Activated CD4-positive, alpha-beta T cell treated with anti-CD3 and anti-CD28 coated beads, Interleukin-2, amount 10 ng/mL, durations not matched to agents 24 days and 14 days (primary cell): ENCODE measurements at regions of chr22 and their contacts with region 1.

Region 1: GRCh38 chr22:25702040-25702439 is 39.9 kb upstream of the MYO18B start:
- DNase-seq: no peak
- H3K4me3 Mint-ChIP-seq: peak overlapping the region; percentile 69
- H3K27ac Mint-ChIP-seq: peak overlapping the region; percentile 61
- H3K4me1 Mint-ChIP-seq: peaks cover 47% of the 10 kb centered on the region
- H3K27me3 Mint-ChIP-seq: no peaks in the 10 kb centered on the region

Region 2: GRCh38 chr22:25447686-25448434 is 254.2 kb before region 1 on chr22:
- intact Hi-C with region 1: loop called (anchors 5 kb)
- DNase-seq: peak; percentile 97
- H3K4me3 Mint-ChIP-seq: peak overlapping the region; percentile 90
- H3K27ac Mint-ChIP-seq: peak overlapping the region; percentile 95
- H3K4me1 Mint-ChIP-seq: peaks cover 39% of the 10 kb centered on the region
- H3K27me3 Mint-ChIP-seq: no peaks in the 10 kb centered on the region

Region 3: DNA sequence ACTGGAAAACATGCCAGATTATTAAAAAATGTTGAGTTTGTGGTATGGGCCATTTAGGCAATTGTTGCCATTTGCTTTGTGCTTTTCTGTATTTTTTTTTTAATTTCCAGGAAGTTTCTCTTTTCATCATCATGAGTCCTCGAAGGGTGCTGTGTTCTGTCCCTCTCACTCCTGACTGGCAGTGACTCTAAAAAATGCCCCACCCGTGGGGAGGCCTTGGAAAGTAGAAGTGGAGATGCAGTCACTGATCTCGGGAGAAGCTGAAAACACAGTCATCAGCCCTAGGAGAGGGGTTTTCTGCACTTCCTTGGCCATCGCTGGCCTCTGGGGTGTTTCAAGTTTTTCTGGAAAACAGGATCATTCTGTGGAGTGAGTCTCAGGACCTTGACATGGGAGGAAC is 236.1 kb before region 1 on chr22:
- intact Hi-C with region 1: loop called (anchors 1 kb)
- DNase-seq: no peak
- H3K4me3 Mint-ChIP-seq: no peak overlapping the region
- H3K27ac Mint-ChIP-seq: peak overlapping the region; percentile 65
- H3K4me1 Mint-ChIP-seq: peaks cover 20% of the 10 kb centered on the region
- H3K27me3 Mint-ChIP-seq: no peaks in the 10 kb centered on the region

Region 4: GRCh38 chr22:25564979-25565677 is 136.9 kb before region 1 on chr22:
- intact Hi-C with region 1: loop called (anchors 2 kb)
- DNase-seq: peak; percentile 79
- H3K4me3 Mint-ChIP-seq: peak overlapping the region; percentile 96
- H3K27ac Mint-ChIP-seq: peak overlapping the region; percentile 95
- H3K4me1 Mint-ChIP-seq: peaks cover 64% of the 10 kb centered on the region
- H3K27me3 Mint-ChIP-seq: no peaks in the 10 kb centered on the region

Region 5: GRCh38 chr22:25623310-25623734 is 78.7 kb before region 1 on chr22:
- intact Hi-C with region 1: no loop called
- DNase-seq: peak; percentile 63
- H3K4me3 Mint-ChIP-seq: no peak overlapping the region
- H3K27ac Mint-ChIP-seq: peak overlapping the region; percentile 25
- H3K4me1 Mint-ChIP-seq: peaks cover 47% of the 10 kb centered on the region
- H3K27me3 Mint-ChIP-seq: no peaks in the 10 kb centered on the region

Region 6: DNA sequence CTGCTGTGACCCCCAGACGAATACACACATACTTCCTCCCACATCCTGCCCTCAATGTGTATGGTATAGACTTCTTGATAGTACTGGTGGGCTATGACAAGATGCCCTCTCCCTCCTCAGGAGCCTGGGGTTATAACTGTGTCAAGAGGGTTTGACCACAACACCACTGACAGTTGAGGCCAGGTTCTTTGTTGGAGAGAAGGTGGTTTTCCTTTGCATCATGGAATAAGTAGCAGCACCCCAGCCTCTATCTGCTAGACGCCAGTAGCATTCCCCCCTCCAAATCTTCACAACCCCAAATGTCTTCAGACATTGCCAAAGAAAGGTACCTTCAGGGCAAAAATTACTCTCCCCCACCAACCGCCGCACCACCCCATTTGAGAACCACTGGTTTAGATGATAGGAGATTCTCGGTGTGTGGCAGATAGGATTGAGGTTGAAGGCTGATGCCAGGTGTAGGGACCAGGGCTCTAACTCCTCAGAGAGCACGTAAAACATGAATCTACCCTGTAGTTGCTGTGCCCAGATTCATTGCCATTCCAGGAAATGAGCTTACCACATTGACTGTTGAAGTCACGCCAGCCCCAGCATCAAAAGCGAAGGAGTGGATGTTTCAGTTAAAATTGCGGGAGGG is 34.5 kb after region 1 on chr22:
- intact Hi-C with region 1: loop called (anchors 2 kb)
- DNase-seq: peak; percentile 92
- H3K4me3 Mint-ChIP-seq: peak overlapping the region; percentile 71
- H3K27ac Mint-ChIP-seq: peak overlapping the region; percentile 98
- H3K4me1 Mint-ChIP-seq: peaks cover 48% of the 10 kb centered on the region
- H3K27me3 Mint-ChIP-seq: no peaks in the 10 kb centered on the region